ENCODE measurements at regions of chr7 and their contacts with region 1.

Region 1: GRCh38 chr7:17474724-17475344 is 176.4 kb downstream of the AHR start:
- DNase-seq: no peak
- H3K4me3 ChIP-seq: no peak overlapping the region
- H3K27ac ChIP-seq: no peak overlapping the region
- H3K4me1 ChIP-seq: no peaks in the 10 kb centered on the region; a peak in 1 of 7 replicates
- H3K27me3 ChIP-seq: no peaks in the 10 kb centered on the region
- CTCF ChIP-seq: peak; percentile 27 to 53 (median 53); a peak in 3 of 4 replicates
- EP300 ChIP-seq: no peak
- POLR2A ChIP-seq: no peak
- RAD21 ChIP-seq: peak; percentile 10 to 41; a peak in 1 of 4 replicates

Region 2: GRCh38 chr7:17488829-17489228 is 14.0 kb after region 1 on chr7:
- CTCF ChIA-PET with region 1: interaction called, 10 read pairs
- POLR2A ChIA-PET with region 1: no interaction called
- DNase-seq: no peak
- H3K4me3 ChIP-seq: no peak overlapping the region
- H3K27ac ChIP-seq: no peak overlapping the region
- H3K4me1 ChIP-seq: 0 out of 7 replicates have a peak, but pooled peaks cover 0 to 2% (median 0%) of the 10 kb centered on the region in 4 experiments
- H3K27me3 ChIP-seq: no peaks in the 10 kb centered on the region
- CTCF ChIP-seq: no peak
- EP300 ChIP-seq: no peak
- POLR2A ChIP-seq: no peak
- RAD21 ChIP-seq: no peak

Measured in H1 (cell line).